Activated CD8-positive, alpha-beta T cell treated with anti-CD3 and anti-CD28 coated beads, Interleukin-2, amount 10 ng/mL, durations not matched to agents 7 days and 5 days (primary cell): ENCODE measurements at regions of chr2 and their contacts with region 1.

Region 1: DNA sequence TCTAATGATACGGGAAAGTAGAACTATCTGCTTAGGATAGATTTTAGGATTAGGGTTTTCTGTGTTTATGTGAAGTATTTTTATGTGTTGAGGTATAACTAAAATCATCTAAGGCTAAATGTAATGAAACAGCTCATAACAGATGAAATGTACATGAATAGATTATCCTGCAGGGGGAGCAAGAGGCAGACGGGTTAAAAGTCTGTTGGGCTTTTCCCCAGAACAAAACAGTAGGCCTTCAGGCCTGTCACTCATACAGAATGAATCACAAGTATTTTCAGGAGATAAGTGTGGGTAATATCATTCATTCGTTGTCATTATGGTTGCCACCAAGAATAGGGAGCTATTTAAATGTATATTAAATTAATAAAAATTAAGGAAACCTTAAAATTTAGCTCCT is 107.9 kb upstream of the IL1R2 start:
- DNase-seq: peak; percentile 44
- ATAC-seq: no peak
- H3K4me3 Mint-ChIP-seq: no peak overlapping the region
- H3K27ac Mint-ChIP-seq: no peak overlapping the region
- H3K4me1 Mint-ChIP-seq: no peaks in the 10 kb centered on the region
- H3K27me3 Mint-ChIP-seq: no peaks in the 10 kb centered on the region

Region 2: GRCh38 chr2:101864426-101864825 is 19.4 kb before region 1 on chr2:
- CTCF ChIA-PET with region 1: interaction called, 18 read pairs
- POLR2A ChIA-PET with region 1: no interaction called
- DNase-seq: no peak
- ATAC-seq: no peak
- H3K4me3 Mint-ChIP-seq: no peak overlapping the region
- H3K27ac Mint-ChIP-seq: no peak overlapping the region
- H3K4me1 Mint-ChIP-seq: peaks cover 11% of the 10 kb centered on the region
- H3K27me3 Mint-ChIP-seq: no peaks in the 10 kb centered on the region

Region 3: DNA sequence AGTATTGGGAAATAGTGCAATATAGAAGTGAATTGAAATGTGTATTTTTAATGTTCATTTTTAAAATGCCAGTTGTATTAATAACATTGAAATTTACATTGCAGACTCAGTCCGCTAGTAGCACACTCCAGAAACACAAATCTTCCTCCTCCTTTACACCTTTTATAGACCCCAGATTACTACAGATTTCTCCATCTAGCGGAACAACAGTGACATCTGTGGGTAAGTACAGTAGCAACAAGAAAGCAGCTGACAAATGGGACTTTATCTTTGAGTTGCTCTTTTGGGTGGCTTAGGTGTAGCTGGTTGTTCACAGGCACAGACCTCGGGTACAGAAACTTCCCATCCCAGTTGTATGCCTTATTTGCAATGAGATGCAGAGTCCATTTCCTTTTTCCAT is 10.3 kb before region 1 on chr2:
- CTCF ChIA-PET with region 1: interaction called, 17 read pairs
- POLR2A ChIA-PET with region 1: interaction called, 3 read pairs
- DNase-seq: no peak
- ATAC-seq: no peak
- H3K4me3 Mint-ChIP-seq: no peak overlapping the region
- H3K27ac Mint-ChIP-seq: no peak overlapping the region
- H3K4me1 Mint-ChIP-seq: peaks cover 6% of the 10 kb centered on the region
- H3K27me3 Mint-ChIP-seq: no peaks in the 10 kb centered on the region

Region 4: DNA sequence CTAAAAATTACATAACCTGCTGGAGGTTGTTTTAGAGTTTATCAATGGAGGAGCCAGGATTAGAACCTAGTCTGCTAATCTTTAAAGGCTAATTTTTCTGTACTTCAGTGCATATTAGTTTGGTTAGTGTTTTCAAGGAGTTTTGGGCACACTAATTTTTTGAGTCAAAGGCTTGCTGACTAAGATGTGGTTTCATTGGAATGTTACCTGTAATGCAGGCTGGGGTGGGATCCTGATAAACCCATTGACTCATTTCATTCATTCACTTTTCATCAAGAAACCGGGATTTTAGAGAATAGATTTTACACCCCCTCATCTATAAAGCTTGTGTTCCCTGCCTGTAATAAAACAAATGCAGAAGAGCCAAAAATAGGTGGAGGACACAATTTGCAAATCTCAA is 16.0 kb after region 1 on chr2:
- CTCF ChIA-PET with region 1: interaction called, 21 read pairs
- POLR2A ChIA-PET with region 1: no interaction called
- DNase-seq: no peak
- ATAC-seq: no peak
- H3K4me3 Mint-ChIP-seq: no peak overlapping the region
- H3K27ac Mint-ChIP-seq: no peak overlapping the region
- H3K4me1 Mint-ChIP-seq: no peaks in the 10 kb centered on the region
- H3K27me3 Mint-ChIP-seq: peaks cover 7% of the 10 kb centered on the region

Region 5: GRCh38 chr2:102005989-102006885 is 122.4 kb after region 1 on chr2:
- CTCF ChIA-PET with region 1: interaction called, 13 read pairs
- POLR2A ChIA-PET with region 1: no interaction called
- DNase-seq: peak; percentile 49
- ATAC-seq: peak; percentile 57
- H3K4me3 Mint-ChIP-seq: no peak overlapping the region
- H3K27ac Mint-ChIP-seq: no peak overlapping the region
- H3K4me1 Mint-ChIP-seq: no peaks in the 10 kb centered on the region
- H3K27me3 Mint-ChIP-seq: peaks cover 2% of the 10 kb centered on the region

Region 6: GRCh38 chr2:102141970-102142828 is 258.3 kb after region 1 on chr2 and contains the start of gene IL1R1:
- CTCF ChIA-PET with region 1: no interaction called
- POLR2A ChIA-PET with region 1: no interaction called
- DNase-seq: no peak
- ATAC-seq: peak; percentile 48
- H3K4me3 Mint-ChIP-seq: peak within 1 kb of the TSS; percentile 42
- H3K27ac Mint-ChIP-seq: no peak within 1 kb of the TSS
- H3K4me1 Mint-ChIP-seq: peaks cover 27% of the 10 kb centered on the region
- H3K27me3 Mint-ChIP-seq: peaks cover 28% of the 10 kb centered on the region
- total RNA-seq, gene IL1R1: not detected